Right ventricle myocardium inferior (tissue), 1 donor: ENCODE measurements at regions of chr7 and their contacts with region 1.

Region 1: DNA sequence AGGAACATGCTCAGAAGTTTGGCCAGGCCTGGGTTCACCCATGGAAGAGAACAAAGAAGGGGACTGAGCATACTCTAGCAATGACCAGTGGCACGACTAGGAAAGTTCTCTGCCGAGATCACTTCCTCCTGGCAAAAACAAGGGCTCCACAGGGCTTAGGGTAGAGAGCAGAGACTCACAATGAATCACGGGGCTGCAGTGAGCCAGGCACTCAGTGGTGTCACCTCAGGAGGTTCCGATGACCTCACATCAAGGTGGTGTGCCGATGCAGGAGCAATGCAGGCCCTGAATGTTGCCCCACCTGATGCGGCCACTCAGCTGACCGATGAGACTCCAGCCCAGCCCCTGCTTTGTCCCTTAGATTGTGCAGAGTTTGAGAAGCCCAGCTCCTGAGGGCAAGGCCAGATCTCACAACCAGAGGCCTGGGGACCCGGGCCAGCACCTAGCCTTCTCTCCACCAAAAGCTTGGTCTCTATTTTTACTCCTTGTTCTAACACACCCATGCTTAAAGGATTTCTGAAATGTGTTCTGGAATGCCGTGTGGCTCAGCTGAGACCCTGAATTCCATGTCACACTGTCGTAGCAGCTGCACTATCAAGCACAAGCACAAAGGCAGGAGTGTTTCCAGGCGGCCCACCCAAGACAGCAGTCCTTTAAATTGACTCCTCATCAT is 60.9 kb downstream of the COBL start:
- DNase-seq: no peak
- ATAC-seq: peak; percentile 69

Region 2: DNA sequence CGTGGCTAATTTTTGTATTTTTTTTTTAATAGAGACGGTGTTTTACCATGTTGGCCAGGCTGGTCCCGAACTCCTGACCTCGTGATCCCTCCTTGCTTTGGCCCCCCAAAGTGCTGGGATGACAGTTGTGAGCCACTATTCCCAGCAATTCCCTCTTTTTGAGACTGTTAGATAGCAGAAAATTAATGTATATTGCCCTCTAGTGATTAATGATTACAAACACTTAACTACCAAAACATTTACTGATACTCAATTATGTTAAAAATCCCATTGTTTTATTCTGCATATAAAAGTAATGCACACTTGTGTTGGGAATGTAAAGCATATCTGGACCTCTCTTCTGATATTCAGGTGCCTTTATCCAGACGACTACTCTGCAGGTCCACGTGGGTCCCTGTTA is 102.1 kb after region 1 on chr7:
- intact Hi-C with region 1: loop called (anchors 2 kb)
- DNase-seq: no peak
- ATAC-seq: no peak

Region 3: GRCh38 chr7:51613911-51614357 is 358.3 kb after region 1 on chr7:
- intact Hi-C with region 1: no loop called
- DNase-seq: no peak
- ATAC-seq: peak; percentile 77